ENCODE measurements at regions of chr15 and their contacts with region 1.

Region 1: GRCh38 chr15:73704869-73705645 is 20.9 kb downstream of the CD276 start:
- DNase-seq: peak; percentile 83
- ATAC-seq: peak; percentile 85
- H3K4me3 Mint-ChIP-seq: no peak overlapping the region
- H3K27ac Mint-ChIP-seq: no peak overlapping the region
- H3K4me1 Mint-ChIP-seq: no peaks in the 10 kb centered on the region
- H3K27me3 Mint-ChIP-seq: peaks cover 3% of the 10 kb centered on the region

Region 2: GRCh38 chr15:73683777-73684580 is 21.1 kb before region 1 on chr15 and contains the start of gene CD276:
- CTCF ChIA-PET with region 1: interaction called, 55 read pairs
- POLR2A ChIA-PET with region 1: no interaction called
- intact Hi-C with region 1: no loop called
- DNase-seq: peak; percentile 41
- ATAC-seq: peak; percentile 59
- H3K4me3 Mint-ChIP-seq: peak within 1 kb of the TSS; percentile 59
- H3K27ac Mint-ChIP-seq: peak within 1 kb of the TSS; percentile 32
- H3K4me1 Mint-ChIP-seq: peaks cover 33% of the 10 kb centered on the region
- H3K27me3 Mint-ChIP-seq: peaks cover 58% of the 10 kb centered on the region
- total RNA-seq, gene CD276: 2.6 to 3.0 TPM

Region 3: DNA sequence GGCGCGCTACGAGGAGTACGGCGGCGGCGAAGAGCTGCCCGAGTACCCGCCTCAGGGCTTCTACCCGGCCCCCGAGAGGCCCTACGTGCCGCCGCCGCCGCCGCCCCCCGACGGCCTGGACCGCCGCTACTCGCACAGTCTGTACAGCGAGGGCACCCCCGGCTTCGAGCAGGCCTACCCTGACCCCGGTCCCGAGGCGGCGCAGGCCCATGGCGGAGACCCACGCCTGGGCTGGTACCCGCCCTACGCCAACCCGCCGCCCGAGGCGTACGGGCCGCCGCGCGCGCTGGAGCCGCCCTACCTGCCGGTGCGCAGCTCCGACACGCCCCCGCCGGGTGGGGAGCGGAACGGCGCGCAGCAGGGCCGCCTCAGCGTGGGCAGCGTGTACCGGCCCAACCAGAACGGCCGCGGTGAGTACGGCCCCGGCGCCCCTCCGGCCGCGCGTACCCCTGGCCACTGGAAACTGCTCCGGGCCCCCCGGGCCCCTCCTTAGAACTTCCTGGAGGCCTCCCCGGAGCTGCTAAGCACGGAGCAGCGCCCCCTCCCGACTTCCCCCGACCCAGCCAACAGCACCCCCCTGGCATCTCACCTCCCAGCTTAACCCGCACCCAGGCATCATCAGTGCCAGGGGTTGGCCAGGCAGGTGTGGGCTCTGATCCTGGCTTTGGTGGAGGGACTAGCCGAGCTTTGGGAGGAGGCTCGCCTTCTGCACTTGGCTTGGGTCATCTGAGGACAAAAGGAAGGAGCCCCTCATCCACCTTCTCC is 222.6 kb after region 1 on chr15:
- CTCF ChIA-PET with region 1: no interaction called
- POLR2A ChIA-PET with region 1: no interaction called
- intact Hi-C with region 1: no loop called
- DNase-seq: peak; percentile 87
- ATAC-seq: peak; percentile 77
- H3K4me3 Mint-ChIP-seq: peak overlapping the region; percentile 72
- H3K27ac Mint-ChIP-seq: peak overlapping the region; percentile 42
- H3K4me1 Mint-ChIP-seq: peaks cover 35% of the 10 kb centered on the region
- H3K27me3 Mint-ChIP-seq: no peaks in the 10 kb centered on the region

Region 4: DNA sequence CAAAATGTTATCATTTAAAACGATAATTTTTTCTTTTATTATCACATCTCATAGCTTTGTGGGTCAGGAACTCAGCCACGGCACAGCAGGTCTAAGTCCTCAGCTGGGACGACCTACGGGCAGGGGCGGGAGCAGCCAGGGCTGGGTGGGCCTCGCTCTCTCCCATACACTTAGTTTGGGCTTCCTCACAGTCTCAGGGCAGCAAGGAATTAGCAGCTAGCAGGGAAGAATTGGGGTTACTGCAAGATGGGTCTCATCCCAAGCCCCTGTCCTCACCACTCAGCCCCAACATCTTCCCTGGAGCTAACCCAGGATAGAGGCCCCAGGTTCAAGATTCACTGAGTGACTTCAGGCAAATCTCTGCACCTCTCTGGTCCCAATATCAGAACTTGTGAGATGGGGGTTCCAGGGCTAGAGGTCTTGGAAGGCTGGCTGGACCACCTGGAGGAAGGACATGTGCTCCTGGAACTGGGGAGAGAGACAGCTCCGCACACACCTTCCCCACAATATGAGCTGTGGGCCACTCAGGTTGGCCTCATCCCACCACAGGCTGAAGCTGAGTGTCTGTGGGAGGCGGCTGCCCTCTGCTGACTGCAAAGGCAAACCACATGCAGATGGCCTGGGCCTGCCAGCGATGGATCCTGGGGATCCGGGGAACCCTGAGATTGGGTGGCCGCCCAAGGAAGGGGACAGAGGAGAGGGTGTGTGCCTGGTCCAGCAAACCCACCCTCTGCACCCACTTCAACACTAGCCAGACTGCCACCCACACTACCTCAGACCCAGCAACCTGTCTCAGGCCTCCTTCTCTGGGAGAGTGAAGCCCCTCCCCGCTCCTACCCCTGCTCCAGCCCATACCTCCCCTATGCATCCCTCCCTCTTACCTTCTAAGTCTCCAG is 617.4 kb after region 1 on chr15:
- CTCF ChIA-PET with region 1: no interaction called
- POLR2A ChIA-PET with region 1: no interaction called
- intact Hi-C with region 1: no loop called
- DNase-seq: peak; percentile 80
- ATAC-seq: peak; percentile 87
- H3K4me3 Mint-ChIP-seq: no peak overlapping the region
- H3K27ac Mint-ChIP-seq: no peak overlapping the region
- H3K4me1 Mint-ChIP-seq: peaks cover 2% of the 10 kb centered on the region
- H3K27me3 Mint-ChIP-seq: no peaks in the 10 kb centered on the region